Ovary (tissue), 10 donors: ENCODE measurements at regions of chr2 and their contacts with region 1.

Region 1: DNA sequence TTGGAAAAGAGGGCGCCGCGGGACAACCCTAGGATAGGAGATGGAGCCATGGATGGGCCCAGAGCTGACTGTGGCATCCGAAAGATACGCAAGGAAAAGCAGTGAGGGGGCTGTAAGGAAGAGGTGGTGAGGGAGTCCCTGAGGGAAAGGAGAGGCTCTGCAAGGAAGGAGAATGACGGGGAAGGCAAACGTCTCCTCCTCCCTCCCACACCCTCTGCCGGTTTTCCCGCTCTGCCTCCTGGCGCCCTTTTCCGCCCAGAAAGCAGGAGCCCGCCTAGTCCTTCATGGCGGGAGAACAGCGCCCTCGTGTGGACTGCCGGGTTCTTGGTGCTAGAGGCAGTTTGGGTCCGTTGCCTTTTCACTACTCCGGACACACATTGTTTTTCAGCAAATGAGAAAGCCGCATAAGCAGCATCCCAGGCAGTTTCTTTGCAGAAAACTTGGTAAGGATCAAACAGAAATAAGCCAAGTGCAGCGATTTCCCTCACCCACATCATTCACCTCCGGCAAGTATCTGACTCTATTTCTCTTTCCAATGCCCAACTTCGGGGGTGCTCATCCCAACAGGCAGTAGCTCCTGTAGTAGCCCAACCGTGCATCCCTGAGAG is 200.4 kb downstream of the INO80D start:
- DNase-seq: peak; percentile 89 to 95 (median 92)
- H3K4me3 ChIP-seq: no peak overlapping the region
- H3K27ac ChIP-seq: no peak overlapping the region
- H3K4me1 ChIP-seq: no peaks in the 10 kb centered on the region
- H3K27me3 ChIP-seq: no peaks in the 10 kb centered on the region
- CTCF ChIP-seq: peak; percentile 83 to 86 (median 85)
- EP300 ChIP-seq: no peak
- POLR2A ChIP-seq: no peak

Region 2: GRCh38 chr2:204776781-204777559 is 1108.6 kb before region 1 on chr2:
- intact Hi-C with region 1: no loop called
- DNase-seq: no peak
- H3K4me3 ChIP-seq: no peak overlapping the region
- H3K27ac ChIP-seq: no peak overlapping the region
- H3K4me1 ChIP-seq: peaks cover 1% of the 10 kb centered on the region
- H3K27me3 ChIP-seq: no peaks in the 10 kb centered on the region
- CTCF ChIP-seq: no peak
- EP300 ChIP-seq: no peak
- POLR2A ChIP-seq: no peak

Region 3: GRCh38 chr2:205766779-205767359 is 118.7 kb before region 1 on chr2:
- intact Hi-C with region 1: loop called (anchors 2 to 10 kb)
- DNase-seq: peak; percentile 60 to 81 (median 76)
- H3K4me3 ChIP-seq: no peak overlapping the region
- H3K27ac ChIP-seq: no peak overlapping the region
- H3K4me1 ChIP-seq: peaks cover 14% of the 10 kb centered on the region
- H3K27me3 ChIP-seq: no peaks in the 10 kb centered on the region
- CTCF ChIP-seq: peak; percentile 58 to 82 (median 75)
- EP300 ChIP-seq: no peak
- POLR2A ChIP-seq: no peak

Region 4: DNA sequence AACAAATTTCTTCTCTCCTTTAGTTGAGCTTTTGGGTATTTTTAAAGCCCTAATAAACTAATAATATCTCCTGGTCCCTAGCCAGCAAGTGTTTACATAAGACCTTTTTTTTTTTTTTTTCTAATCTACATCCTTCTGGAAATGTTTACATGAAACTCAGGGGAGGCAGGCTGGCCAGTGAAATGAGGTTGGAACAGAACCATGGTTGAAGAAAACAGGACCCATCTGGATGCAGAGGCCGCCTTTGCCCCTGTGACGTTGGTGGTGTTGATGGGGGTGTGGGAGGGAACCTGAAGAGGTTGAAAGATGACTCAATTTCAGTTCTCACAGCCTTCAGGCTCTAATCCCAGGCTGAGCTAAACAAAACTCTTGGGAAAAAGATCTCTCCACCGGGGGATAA is 84.8 kb before region 1 on chr2:
- intact Hi-C with region 1: no loop called
- DNase-seq: peak; percentile 90 to 94 (median 92)
- H3K4me3 ChIP-seq: no peak overlapping the region
- H3K27ac ChIP-seq: peak overlapping the region; percentile 10 to 83
- H3K4me1 ChIP-seq: peaks cover 10% of the 10 kb centered on the region
- H3K27me3 ChIP-seq: no peaks in the 10 kb centered on the region
- CTCF ChIP-seq: no peak
- EP300 ChIP-seq: no peak
- POLR2A ChIP-seq: no peak

Region 5: DNA sequence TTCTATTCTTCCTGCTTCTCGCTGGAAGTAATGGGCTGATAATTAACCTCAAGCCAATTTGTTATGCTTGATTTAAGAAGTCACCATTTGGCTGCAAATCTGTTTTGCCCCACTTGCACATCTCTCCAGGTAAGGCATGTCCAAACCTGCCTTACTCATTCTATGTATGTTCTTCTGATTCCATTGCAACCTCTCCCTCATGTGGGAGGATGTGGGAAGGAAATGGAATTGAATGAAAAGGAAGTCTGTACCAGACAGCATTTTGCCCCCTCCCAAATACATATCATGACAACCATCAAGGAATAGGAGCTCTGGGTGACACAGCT is 71.6 kb before region 1 on chr2:
- intact Hi-C with region 1: no loop called
- DNase-seq: no peak
- H3K4me3 ChIP-seq: no peak overlapping the region
- H3K27ac ChIP-seq: no peak overlapping the region
- H3K4me1 ChIP-seq: no peaks in the 10 kb centered on the region
- H3K27me3 ChIP-seq: no peaks in the 10 kb centered on the region
- CTCF ChIP-seq: no peak
- EP300 ChIP-seq: no peak
- POLR2A ChIP-seq: no peak